ENCODE measurements at regions of chr19 and their contacts with region 1.

Region 1: DNA sequence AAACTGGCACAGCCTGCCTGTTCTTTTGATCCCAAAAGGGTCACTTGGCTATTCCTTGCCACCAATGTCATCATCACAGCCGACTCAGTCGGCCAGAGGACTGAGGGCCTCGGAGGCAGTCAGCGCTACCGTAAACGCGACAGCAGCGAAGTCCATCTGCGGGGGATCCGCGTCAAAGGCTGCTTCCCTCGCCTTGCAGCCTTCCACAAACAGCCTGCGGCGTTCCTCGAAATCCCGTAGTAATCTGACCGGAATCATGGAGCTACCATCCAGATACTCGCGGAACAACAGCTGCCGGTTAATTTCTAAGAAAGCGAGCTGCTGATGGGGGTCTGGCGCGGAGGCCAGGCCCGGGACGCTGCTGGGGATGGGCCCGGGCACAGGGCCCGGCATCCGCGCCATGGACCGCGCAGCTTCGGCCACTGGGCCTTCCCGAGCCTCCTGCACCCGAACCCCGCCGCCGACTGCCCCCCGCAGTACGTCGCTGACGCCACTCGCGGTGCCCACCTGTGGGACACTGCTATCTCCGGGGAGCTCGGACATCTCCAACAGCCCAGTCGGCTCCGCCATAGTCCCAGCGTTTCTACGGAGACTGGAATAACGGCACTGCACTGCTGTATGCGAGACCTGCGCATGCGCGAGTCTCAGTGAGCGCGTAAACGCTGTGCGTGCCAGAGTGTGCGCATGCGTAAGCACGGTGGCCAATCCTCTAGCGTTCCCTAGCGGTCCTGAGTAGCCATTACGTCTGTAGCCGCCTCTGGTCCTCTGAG is at the start of gene EID2B:
- DNase-seq: peak; percentile 96
- H3K4me3 Mint-ChIP-seq: peak within 1 kb of the TSS; percentile 92
- H3K27ac Mint-ChIP-seq: peak within 1 kb of the TSS; percentile 75
- H3K4me1 Mint-ChIP-seq: peaks cover 33% of the 10 kb centered on the region
- H3K27me3 Mint-ChIP-seq: no peaks in the 10 kb centered on the region
- total RNA-seq, gene EID2B: 4.5 to 4.7 TPM

Region 2: GRCh38 chr19:39474139-39474622 is 58.2 kb before region 1 on chr19:
- CTCF ChIA-PET with region 1: interaction called, 24 read pairs
- POLR2A ChIA-PET with region 1: no interaction called
- DNase-seq: peak; percentile 66
- H3K4me3 Mint-ChIP-seq: no peak overlapping the region
- H3K27ac Mint-ChIP-seq: no peak overlapping the region
- H3K4me1 Mint-ChIP-seq: peaks cover 11% of the 10 kb centered on the region
- H3K27me3 Mint-ChIP-seq: no peaks in the 10 kb centered on the region

Region 3: GRCh38 chr19:39502640-39503417 is 29.6 kb before region 1 on chr19:
- CTCF ChIA-PET with region 1: interaction called, 10 read pairs
- POLR2A ChIA-PET with region 1: interaction called, 3 read pairs
- DNase-seq: peak; percentile 80
- H3K4me3 Mint-ChIP-seq: no peak overlapping the region
- H3K27ac Mint-ChIP-seq: no peak overlapping the region
- H3K4me1 Mint-ChIP-seq: peaks cover 33% of the 10 kb centered on the region
- H3K27me3 Mint-ChIP-seq: peaks cover 66% of the 10 kb centered on the region

Measured in activated CD4-positive, alpha-beta memory T cell treated with anti-CD3 and anti-CD28 coated beads, Interleukin-2, amount 10 ng/mL, durations not matched to agents 7 days and 5 days (primary cell).